ENCODE measurements at regions of chr3 and their contacts with region 1.

Region 1: GRCh38 chr3:177337541-177338331 is 140.5 kb upstream of the TBL1XR1 start:
- DNase-seq: peak; percentile 83
- ATAC-seq: peak; percentile 83
- H3K4me3 ChIP-seq: no peak overlapping the region
- H3K4me3 Mint-ChIP-seq: peak overlapping the region; percentile 51
- H3K27ac ChIP-seq: peak overlapping the region; percentile 38 to 77
- H3K27ac Mint-ChIP-seq: peak overlapping the region; percentile 67
- H3K4me1 ChIP-seq: peaks cover 37 to 42% of the 10 kb centered on the region in 2 donors
- H3K4me1 Mint-ChIP-seq: peaks cover 51% of the 10 kb centered on the region
- H3K27me3 ChIP-seq: no peaks in the 10 kb centered on the region
- H3K27me3 Mint-ChIP-seq: no peaks in the 10 kb centered on the region
- CTCF ChIP-seq: no peak

Region 2: GRCh38 chr3:176861137-176861536 is 476.6 kb before region 1 on chr3:
- CTCF ChIA-PET with region 1: no interaction called
- POLR2A ChIA-PET with region 1: no interaction called
- intact Hi-C with region 1: no loop called
- DNase-seq: no peak
- ATAC-seq: no peak
- H3K4me3 ChIP-seq: no peak overlapping the region
- H3K4me3 Mint-ChIP-seq: no peak overlapping the region
- H3K27ac ChIP-seq: no peak overlapping the region
- H3K27ac Mint-ChIP-seq: no peak overlapping the region
- H3K4me1 ChIP-seq: no peaks in the 10 kb centered on the region
- H3K4me1 Mint-ChIP-seq: no peaks in the 10 kb centered on the region
- H3K27me3 ChIP-seq: no peaks in the 10 kb centered on the region
- H3K27me3 Mint-ChIP-seq: peaks cover 10% of the 10 kb centered on the region
- CTCF ChIP-seq: no peak

Region 3: DNA sequence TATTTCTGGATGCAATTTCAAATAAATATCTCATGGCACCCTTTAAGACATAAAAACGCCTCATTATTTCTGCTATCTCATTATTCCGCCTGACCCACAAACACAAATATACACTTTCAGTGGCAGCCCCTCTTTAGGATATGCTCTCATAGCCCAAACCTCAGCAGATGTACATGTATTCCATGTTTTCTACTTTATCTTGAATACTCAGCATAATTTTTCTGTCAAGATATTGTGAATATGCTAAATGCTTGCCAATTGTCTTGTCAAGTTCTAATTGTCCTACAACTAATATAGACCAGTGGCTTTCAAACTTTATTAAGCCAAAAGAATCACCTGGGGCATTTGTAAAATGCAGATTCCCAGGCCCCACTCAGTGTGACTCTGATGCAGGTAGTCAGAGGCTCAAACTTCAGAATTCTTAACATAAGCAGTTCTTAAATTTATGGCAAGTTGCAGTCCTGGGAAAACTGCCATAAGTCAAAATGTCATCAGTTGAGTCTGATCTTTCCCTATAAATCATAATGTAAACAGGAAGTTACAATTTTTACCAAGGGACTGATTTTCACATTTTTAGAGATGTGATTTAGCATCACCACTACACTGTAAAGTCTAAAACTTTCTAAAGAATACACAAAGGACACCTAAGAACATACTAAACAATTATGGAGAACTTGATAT is 275.5 kb before region 1 on chr3:
- CTCF ChIA-PET with region 1: no interaction called
- POLR2A ChIA-PET with region 1: no interaction called
- intact Hi-C with region 1: no loop called
- DNase-seq: no peak
- ATAC-seq: no peak
- H3K4me3 ChIP-seq: no peak overlapping the region
- H3K4me3 Mint-ChIP-seq: no peak overlapping the region
- H3K27ac ChIP-seq: no peak overlapping the region
- H3K27ac Mint-ChIP-seq: no peak overlapping the region
- H3K4me1 ChIP-seq: peaks cover 8 to 11% of the 10 kb centered on the region in 2 donors
- H3K4me1 Mint-ChIP-seq: peaks cover 26% of the 10 kb centered on the region
- H3K27me3 ChIP-seq: no peaks in the 10 kb centered on the region
- H3K27me3 Mint-ChIP-seq: no peaks in the 10 kb centered on the region
- CTCF ChIP-seq: no peak

Region 4: DNA sequence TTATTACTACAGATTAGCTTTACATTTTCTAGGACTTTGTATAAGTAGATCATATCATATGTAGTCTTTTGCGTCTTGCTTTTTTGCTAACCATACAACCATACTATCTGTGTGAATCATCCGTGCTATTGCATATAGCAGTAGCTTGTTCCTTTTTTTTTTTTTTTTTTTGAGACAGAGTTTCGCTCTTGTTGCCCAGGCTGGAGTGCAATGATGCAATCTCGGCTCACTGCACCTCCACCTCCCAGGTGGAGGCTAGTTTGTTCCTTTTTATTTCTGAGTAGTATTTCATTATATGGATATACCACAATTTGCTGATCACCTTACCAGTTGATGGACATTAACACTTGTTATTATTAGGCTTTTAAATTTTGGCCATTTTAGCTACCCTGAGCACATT is 86.0 kb before region 1 on chr3:
- CTCF ChIA-PET with region 1: no interaction called
- POLR2A ChIA-PET with region 1: no interaction called
- intact Hi-C with region 1: loop called (anchors 5 kb)
- DNase-seq: peak; percentile 52
- ATAC-seq: peak; percentile 58
- H3K4me3 ChIP-seq: no peak overlapping the region
- H3K4me3 Mint-ChIP-seq: no peak overlapping the region
- H3K27ac ChIP-seq: no peak overlapping the region
- H3K27ac Mint-ChIP-seq: no peak overlapping the region
- H3K4me1 ChIP-seq: peaks cover 11 to 19% of the 10 kb centered on the region in 2 donors
- H3K4me1 Mint-ChIP-seq: peaks cover 28% of the 10 kb centered on the region
- H3K27me3 ChIP-seq: no peaks in the 10 kb centered on the region
- H3K27me3 Mint-ChIP-seq: no peaks in the 10 kb centered on the region
- CTCF ChIP-seq: no peak

Region 5: GRCh38 chr3:177320765-177321247 is 16.9 kb before region 1 on chr3:
- CTCF ChIA-PET with region 1: interaction called, 18 read pairs
- POLR2A ChIA-PET with region 1: interaction called, 4 read pairs
- intact Hi-C with region 1: loop called (anchors 1 kb)
- DNase-seq: peak; percentile 48
- ATAC-seq: peak; percentile 32
- H3K4me3 ChIP-seq: peak overlapping the region in 1 of 5 experiments; percentile 31
- H3K4me3 Mint-ChIP-seq: peak overlapping the region; percentile 72
- H3K27ac ChIP-seq: peak overlapping the region; percentile 5 to 61
- H3K27ac Mint-ChIP-seq: peak overlapping the region; percentile 83
- H3K4me1 ChIP-seq: peaks cover 78 to 81% of the 10 kb centered on the region in 2 donors
- H3K4me1 Mint-ChIP-seq: peaks cover 69% of the 10 kb centered on the region
- H3K27me3 ChIP-seq: no peaks in the 10 kb centered on the region
- H3K27me3 Mint-ChIP-seq: no peaks in the 10 kb centered on the region
- CTCF ChIP-seq: no peak

Region 6: DNA sequence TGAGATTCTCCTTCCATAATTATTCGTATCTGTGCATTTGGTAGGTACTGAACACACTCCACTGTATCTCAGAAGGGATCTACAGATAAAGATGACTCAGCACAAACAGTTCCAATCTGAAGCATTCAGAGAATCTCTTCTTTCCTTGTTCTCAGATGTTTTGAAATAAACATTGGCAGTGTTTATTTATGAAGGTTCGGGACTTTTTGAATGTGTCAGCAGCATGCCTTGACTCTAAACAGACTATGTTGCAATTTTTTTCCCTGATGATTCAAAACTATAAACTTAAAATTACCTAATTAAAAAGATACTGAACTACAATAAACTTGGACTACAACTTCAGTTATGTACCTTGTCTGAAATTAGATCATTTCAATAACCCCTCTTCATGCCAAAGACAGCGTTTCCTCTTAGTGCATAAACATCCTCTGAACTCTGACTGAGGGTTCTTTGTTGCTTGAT is 472.5 kb after region 1 on chr3:
- CTCF ChIA-PET with region 1: no interaction called
- POLR2A ChIA-PET with region 1: no interaction called
- intact Hi-C with region 1: no loop called
- DNase-seq: no peak
- ATAC-seq: no peak
- H3K4me3 ChIP-seq: no peak overlapping the region
- H3K4me3 Mint-ChIP-seq: no peak overlapping the region
- H3K27ac ChIP-seq: no peak overlapping the region
- H3K27ac Mint-ChIP-seq: no peak overlapping the region
- H3K4me1 ChIP-seq: peaks cover 4 to 13% of the 10 kb centered on the region in 2 donors
- H3K4me1 Mint-ChIP-seq: peaks cover 9% of the 10 kb centered on the region
- H3K27me3 ChIP-seq: no peaks in the 10 kb centered on the region
- H3K27me3 Mint-ChIP-seq: no peaks in the 10 kb centered on the region
- CTCF ChIP-seq: no peak

Region 7: DNA sequence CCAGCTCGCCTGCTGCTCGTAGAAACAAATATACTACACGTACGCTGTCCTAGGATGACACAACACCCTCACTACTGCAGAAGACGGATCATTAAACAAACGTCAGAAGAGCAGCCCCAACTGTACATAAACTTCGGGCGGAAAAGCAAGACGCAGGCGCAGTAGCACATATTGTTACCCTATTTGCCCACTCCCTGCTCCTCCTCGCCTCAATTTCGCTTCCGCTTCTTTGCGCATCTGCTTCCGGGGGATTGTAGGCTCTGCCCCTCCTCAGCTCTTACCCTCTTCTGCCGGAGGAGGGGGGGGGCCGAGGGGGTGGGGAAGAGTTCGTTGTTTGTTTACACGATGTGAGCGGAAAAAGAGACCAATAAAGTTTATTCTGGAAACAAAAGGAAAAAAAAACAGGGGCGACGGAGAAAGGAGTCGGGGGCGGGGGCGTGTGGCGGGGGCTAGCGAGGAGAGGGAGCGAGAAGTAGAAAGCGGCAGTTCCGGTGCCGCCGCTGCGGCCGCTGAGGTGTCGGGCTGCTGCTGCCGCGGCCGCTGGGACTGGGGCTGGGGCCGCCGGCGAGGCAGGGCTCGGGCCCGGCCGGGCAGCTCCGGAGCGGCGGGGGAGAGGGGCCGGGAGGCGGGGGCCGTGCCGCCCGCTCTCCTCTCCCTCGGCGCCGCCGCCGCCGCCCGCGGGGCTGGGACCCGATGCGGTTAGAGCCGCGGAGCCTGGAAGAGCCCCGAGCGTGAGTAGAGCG is 1810.3 kb after region 1 on chr3 and contains the start of gene PIK3CA:
- CTCF ChIA-PET with region 1: no interaction called
- POLR2A ChIA-PET with region 1: no interaction called
- intact Hi-C with region 1: no loop called
- DNase-seq: peak; percentile 98
- ATAC-seq: peak; percentile 76
- H3K4me3 ChIP-seq: peak within 1 kb of the TSS; percentile 84 to 98 (median 90)
- H3K4me3 Mint-ChIP-seq: peak within 1 kb of the TSS; percentile 97
- H3K27ac ChIP-seq: peak within 1 kb of the TSS; percentile 92 to 93
- H3K27ac Mint-ChIP-seq: peak within 1 kb of the TSS; percentile 97
- H3K4me1 ChIP-seq: peaks cover 11 to 22% of the 10 kb centered on the region in 2 donors
- H3K4me1 Mint-ChIP-seq: peaks cover 39% of the 10 kb centered on the region
- H3K27me3 ChIP-seq: no peaks in the 10 kb centered on the region
- H3K27me3 Mint-ChIP-seq: peaks cover 3% of the 10 kb centered on the region
- CTCF ChIP-seq: no peak
- total RNA-seq, gene PIK3CA: 59.5 and 61.8 TPM in 2 replicates